Common myeloid progenitor, CD34-positive (primary cell): ENCODE measurements at regions of chr1 and their contacts with region 1.

Region 1: GRCh38 chr1:241627453-241628259 is 12.5 kb downstream of the CHML start:
- DNase-seq: peak; percentile 78 to 87 (median 87)
- H3K4me3 ChIP-seq: peak overlapping the region in 3 of 7 experiments; percentile 41 to 51 (median 45)
- H3K27ac ChIP-seq: peak overlapping the region in 1 of 2 experiments; percentile 49
- H3K4me1 ChIP-seq: peaks cover 0 to 12% (median 9%) of the 10 kb centered on the region in 4 experiments
- H3K27me3 ChIP-seq: no peaks in the 10 kb centered on the region

Region 2: GRCh38 chr1:241557551-241558193 is 70.0 kb before region 1 on chr1:
- CTCF ChIA-PET with region 1: no interaction called
- POLR2A ChIA-PET with region 1: no interaction called
- DNase-seq: no peak
- H3K4me3 ChIP-seq: no peak overlapping the region
- H3K27ac ChIP-seq: no peak overlapping the region
- H3K4me1 ChIP-seq: peaks cover 0 to 19% (median 3%) of the 10 kb centered on the region in 4 experiments
- H3K27me3 ChIP-seq: no peaks in the 10 kb centered on the region

Region 3: DNA sequence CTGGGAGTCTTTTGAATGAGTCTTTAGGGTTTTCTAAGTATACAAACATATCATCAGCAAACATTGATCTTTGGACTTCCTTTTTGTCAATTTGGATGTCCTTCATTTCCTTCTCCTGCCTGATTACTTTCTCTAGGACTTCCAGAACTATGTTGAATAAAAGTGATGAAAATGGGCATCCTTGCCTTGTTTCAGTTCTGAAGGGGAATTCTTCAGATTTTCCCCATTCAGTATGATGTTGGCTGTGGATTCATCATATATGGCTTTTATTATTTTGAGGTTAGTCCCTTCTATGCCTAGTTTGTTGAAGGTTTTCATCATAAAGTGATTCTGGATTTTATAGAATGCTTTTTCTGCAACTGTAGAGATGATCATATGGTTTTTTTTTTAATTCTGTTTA is 53.5 kb before region 1 on chr1:
- CTCF ChIA-PET with region 1: no interaction called
- POLR2A ChIA-PET with region 1: no interaction called
- DNase-seq: no peak
- H3K4me3 ChIP-seq: no peak overlapping the region
- H3K27ac ChIP-seq: no peak overlapping the region
- H3K4me1 ChIP-seq: no peaks in the 10 kb centered on the region
- H3K27me3 ChIP-seq: no peaks in the 10 kb centered on the region

Region 4: GRCh38 chr1:241611063-241611462 is 16.6 kb before region 1 on chr1:
- CTCF ChIA-PET with region 1: interaction called, 80 read pairs
- POLR2A ChIA-PET with region 1: no interaction called
- DNase-seq: peak; percentile 62 to 74 (median 73)
- H3K4me3 ChIP-seq: no peak overlapping the region
- H3K27ac ChIP-seq: no peak overlapping the region
- H3K4me1 ChIP-seq: no peaks in the 10 kb centered on the region
- H3K27me3 ChIP-seq: no peaks in the 10 kb centered on the region